GM10248 (cell line): ENCODE measurements at regions of chr6 and their contacts with region 1.

Region 1: GRCh38 chr6:73329201-73329600 is 24.9 kb downstream of the DPPA5 start:
- DNase-seq: no peak
- CTCF ChIP-seq: no peak

Region 2: GRCh38 chr6:73285674-73286283 is 43.4 kb before region 1 on chr6:
- CTCF ChIA-PET with region 1: interaction called, 78 read pairs
- POLR2A ChIA-PET with region 1: no interaction called
- DNase-seq: no peak
- CTCF ChIP-seq: peak; percentile 39

Region 3: GRCh38 chr6:73309769-73310502 is 19.3 kb before region 1 on chr6:
- CTCF ChIA-PET with region 1: interaction called, 38 read pairs
- POLR2A ChIA-PET with region 1: no interaction called
- DNase-seq: peak; percentile 89
- CTCF ChIP-seq: peak; percentile 68

Region 4: DNA sequence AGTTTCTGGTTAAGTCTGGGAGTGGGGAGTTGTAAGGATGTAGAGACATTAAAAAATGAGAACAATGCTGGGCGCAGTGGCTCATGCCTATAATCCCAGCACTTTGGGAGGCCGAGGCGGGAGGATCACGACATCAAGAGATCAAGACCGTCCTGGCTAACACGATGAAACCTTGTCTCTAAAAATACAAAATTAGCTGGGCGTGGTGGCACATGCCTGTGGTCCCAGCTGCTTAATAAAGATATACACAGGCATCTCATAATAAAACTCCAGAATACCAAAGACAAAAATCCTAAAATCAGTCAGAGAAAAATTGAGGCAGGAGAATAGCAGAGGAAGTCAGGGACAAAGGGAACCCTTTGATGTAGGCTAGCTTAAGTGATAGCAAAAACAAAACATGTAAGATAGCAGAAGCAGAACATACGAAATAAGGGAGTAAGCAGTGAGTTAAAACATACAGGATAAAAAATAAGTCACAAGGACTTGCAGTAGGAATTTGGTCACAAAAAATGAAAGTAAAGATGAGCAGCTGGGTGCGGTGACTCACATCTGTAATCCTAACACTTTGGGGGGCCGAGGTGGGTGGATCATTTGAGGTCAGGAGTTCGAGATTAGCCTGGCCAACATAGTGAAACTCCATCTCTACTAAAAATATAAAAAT is 89.0 kb after region 1 on chr6:
- CTCF ChIA-PET with region 1: no interaction called
- POLR2A ChIA-PET with region 1: no interaction called
- DNase-seq: no peak
- CTCF ChIP-seq: no peak

Region 5: GRCh38 chr6:73443555-73443954 is 114.4 kb after region 1 on chr6:
- CTCF ChIA-PET with region 1: no interaction called
- POLR2A ChIA-PET with region 1: no interaction called
- DNase-seq: no peak
- CTCF ChIP-seq: no peak

Region 6: GRCh38 chr6:73798592-73798991 is 469.4 kb after region 1 on chr6:
- CTCF ChIA-PET with region 1: no interaction called
- POLR2A ChIA-PET with region 1: no interaction called
- DNase-seq: peak; percentile 48
- CTCF ChIP-seq: no peak